Activated CD4-positive, alpha-beta T cell treated with anti-CD3 and anti-CD28 coated beads for 36 hours (primary cell): ENCODE measurements at regions of chr12 and their contacts with region 1.

Region 1: DNA sequence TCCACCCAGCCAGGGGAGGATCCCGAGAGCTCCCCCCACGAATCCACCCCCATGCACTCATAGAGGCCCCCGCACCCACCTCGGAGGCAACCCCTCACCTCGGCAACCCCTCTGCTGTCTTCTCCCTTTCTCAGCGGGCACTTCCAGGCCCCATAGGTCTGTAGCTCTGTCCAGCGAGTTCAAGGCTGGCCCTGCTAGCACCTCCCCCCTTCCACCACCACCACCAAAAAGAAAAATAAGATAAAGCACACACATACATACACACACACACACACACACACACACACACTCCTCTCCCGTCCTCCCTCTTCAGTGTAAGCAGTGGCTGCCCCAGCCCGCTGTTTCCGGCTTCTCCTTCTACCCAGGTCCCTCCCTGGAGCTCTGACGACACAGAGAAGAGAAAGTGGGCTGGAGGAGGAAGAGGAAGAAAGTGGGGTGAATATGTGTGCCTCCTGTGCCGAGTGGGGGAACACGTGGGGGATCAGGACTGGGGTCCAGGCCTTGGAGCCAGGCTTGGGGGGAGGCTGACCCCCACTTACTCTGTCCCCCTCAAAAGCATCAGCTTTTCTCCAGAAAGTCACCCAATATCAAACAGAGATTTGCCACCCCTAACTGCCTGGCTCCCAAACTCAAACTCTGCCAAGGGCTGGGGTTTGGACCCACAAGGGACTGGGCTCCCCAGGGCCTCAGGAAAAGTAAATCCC is at the start of gene STAT6:
- DNase-seq: peak; percentile 89
- ATAC-seq: peak; percentile 65
- H3K4me3 Mint-ChIP-seq: peak within 1 kb of the TSS; percentile 98
- H3K27ac Mint-ChIP-seq: peak within 1 kb of the TSS; percentile 97
- H3K4me1 Mint-ChIP-seq: peaks cover 50% of the 10 kb centered on the region
- H3K27me3 Mint-ChIP-seq: no peaks in the 10 kb centered on the region
- total RNA-seq, gene STAT6: 250 to 288 TPM

Region 2: DNA sequence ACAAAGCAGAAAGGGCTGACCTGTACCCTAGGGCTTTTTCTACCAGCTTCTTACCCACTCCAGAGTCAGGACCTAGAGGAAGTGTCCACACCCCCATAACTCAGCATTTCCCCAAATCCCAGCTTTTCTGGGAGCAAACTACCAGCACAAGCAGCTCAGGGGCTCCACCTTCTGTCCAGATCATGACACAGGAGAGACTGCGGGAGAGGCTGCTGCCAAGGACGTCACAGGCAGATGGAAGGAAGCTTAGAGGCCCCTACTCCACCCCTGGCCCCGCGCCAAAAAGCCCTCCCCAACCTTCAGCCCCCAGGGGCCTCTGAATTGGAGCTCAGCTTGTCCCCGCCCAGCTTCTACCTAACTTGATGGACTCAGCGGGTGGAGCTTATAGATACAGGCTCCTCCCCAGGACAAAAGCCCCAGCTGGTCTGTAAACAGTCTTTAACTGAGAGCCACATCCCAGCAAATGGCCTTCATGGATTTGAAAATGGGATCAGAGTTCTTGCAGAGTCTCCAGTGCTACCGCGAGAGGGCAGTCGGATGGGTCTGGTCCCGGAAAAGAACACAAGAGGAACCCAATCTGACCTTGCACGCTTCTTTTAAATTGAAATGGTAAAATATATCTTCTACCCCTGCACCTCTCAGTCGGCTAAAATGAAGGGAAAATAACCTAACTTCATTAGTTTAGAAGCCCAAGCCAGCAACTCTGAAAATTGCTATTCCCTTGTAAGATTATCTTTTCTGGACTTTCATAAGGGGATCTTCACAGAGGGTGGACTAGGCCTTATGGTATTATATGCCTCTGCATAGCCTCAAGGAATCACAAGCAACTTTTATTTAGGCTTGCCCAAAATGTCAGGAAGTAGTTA is 474.3 kb before region 1 on chr12:
- CTCF ChIA-PET with region 1: no interaction called
- POLR2A ChIA-PET with region 1: interaction called, 5 read pairs
- intact Hi-C with region 1: loop called in 1 of 2 experiments (anchors 2 kb)
- DNase-seq: peak; percentile 98
- ATAC-seq: peak; percentile 73
- H3K4me3 Mint-ChIP-seq: peak overlapping the region; percentile 87
- H3K27ac Mint-ChIP-seq: peak overlapping the region; percentile 92
- H3K4me1 Mint-ChIP-seq: peaks cover 60% of the 10 kb centered on the region
- H3K27me3 Mint-ChIP-seq: no peaks in the 10 kb centered on the region

Region 3: DNA sequence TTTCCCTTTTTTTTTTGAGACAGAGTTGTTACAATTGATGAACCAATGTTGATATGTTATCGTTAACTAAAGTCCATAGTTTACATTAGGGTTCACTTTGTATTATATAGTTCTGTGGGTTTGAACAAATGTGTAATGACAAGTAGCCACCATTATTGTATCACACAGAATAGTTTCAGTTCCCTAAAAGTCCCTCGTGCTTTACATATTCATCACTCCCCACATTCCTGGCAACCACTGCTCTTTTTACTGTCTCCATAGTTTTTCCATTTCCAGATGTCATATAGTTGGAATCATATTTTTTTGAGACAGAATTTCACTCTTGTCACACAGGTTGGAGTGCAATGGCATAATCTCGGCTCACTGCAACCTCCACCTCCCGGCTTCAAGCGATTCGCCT is 335.5 kb before region 1 on chr12:
- CTCF ChIA-PET with region 1: no interaction called
- POLR2A ChIA-PET with region 1: no interaction called
- intact Hi-C with region 1: no loop called
- DNase-seq: no peak
- ATAC-seq: no peak
- H3K4me3 Mint-ChIP-seq: no peak overlapping the region
- H3K27ac Mint-ChIP-seq: no peak overlapping the region
- H3K4me1 Mint-ChIP-seq: no peaks in the 10 kb centered on the region
- H3K27me3 Mint-ChIP-seq: no peaks in the 10 kb centered on the region

Region 4: GRCh38 chr12:56998981-56999380 is 112.2 kb before region 1 on chr12:
- CTCF ChIA-PET with region 1: interaction called, 14 read pairs
- POLR2A ChIA-PET with region 1: interaction called, 4 read pairs
- intact Hi-C with region 1: no loop called
- DNase-seq: peak; percentile 82
- ATAC-seq: peak; percentile 87
- H3K4me3 Mint-ChIP-seq: no peak overlapping the region
- H3K27ac Mint-ChIP-seq: peak overlapping the region; percentile 38
- H3K4me1 Mint-ChIP-seq: peaks cover 48% of the 10 kb centered on the region
- H3K27me3 Mint-ChIP-seq: no peaks in the 10 kb centered on the region

Region 5: DNA sequence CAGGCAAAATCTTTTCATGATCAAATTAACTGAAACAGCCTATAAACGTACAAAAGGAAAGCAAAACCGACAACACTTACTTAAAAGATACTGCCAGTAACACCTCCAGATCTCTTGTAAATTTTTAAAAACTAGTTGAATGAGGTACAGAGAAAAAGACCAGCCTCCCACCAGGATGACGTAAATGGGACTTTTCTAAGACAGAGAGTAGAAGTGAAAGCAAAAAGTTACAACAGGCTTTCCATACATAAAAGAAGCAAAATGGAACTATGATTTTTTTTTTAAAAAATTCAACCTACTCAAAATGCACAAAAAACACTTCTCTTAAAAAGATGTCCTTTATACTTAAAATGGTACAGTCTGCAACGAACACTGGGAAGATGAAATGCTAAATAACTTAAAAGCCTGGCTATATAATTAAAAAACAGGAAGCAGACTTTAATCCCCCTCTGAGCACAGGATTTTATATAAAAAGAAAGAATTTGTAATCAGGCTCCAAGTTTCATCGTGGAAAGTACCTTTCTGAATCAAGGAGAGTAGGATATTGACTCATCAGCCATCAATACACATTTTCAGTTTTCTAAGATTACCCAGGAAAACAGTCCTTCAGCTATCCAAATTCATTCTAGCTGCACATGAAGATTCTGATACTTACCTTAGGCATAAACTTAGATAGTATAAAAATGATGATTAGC is 47.0 kb before region 1 on chr12:
- CTCF ChIA-PET with region 1: interaction called, 411 read pairs
- POLR2A ChIA-PET with region 1: interaction called, 20 read pairs
- intact Hi-C with region 1: loop called (anchors 1 kb)
- DNase-seq: peak; percentile 80
- ATAC-seq: peak; percentile 79
- H3K4me3 Mint-ChIP-seq: peak overlapping the region; percentile 76
- H3K27ac Mint-ChIP-seq: peak overlapping the region; percentile 98
- H3K4me1 Mint-ChIP-seq: peaks cover 66% of the 10 kb centered on the region
- H3K27me3 Mint-ChIP-seq: no peaks in the 10 kb centered on the region

Region 6: GRCh38 chr12:57088459-57089248 is 22.5 kb before region 1 on chr12 and contains the start of gene NAB2:
- CTCF ChIA-PET with region 1: interaction called, 411 read pairs
- POLR2A ChIA-PET with region 1: interaction called, 12 read pairs
- intact Hi-C with region 1: loop called (anchors 1 kb)
- DNase-seq: peak; percentile 95
- ATAC-seq: peak; percentile 49
- H3K4me3 Mint-ChIP-seq: peak within 1 kb of the TSS; percentile 93
- H3K27ac Mint-ChIP-seq: peak within 1 kb of the TSS; percentile 95
- H3K4me1 Mint-ChIP-seq: peaks cover 63% of the 10 kb centered on the region
- H3K27me3 Mint-ChIP-seq: no peaks in the 10 kb centered on the region
- total RNA-seq, gene NAB2: 46.8 to 48.6 TPM

Region 7: DNA sequence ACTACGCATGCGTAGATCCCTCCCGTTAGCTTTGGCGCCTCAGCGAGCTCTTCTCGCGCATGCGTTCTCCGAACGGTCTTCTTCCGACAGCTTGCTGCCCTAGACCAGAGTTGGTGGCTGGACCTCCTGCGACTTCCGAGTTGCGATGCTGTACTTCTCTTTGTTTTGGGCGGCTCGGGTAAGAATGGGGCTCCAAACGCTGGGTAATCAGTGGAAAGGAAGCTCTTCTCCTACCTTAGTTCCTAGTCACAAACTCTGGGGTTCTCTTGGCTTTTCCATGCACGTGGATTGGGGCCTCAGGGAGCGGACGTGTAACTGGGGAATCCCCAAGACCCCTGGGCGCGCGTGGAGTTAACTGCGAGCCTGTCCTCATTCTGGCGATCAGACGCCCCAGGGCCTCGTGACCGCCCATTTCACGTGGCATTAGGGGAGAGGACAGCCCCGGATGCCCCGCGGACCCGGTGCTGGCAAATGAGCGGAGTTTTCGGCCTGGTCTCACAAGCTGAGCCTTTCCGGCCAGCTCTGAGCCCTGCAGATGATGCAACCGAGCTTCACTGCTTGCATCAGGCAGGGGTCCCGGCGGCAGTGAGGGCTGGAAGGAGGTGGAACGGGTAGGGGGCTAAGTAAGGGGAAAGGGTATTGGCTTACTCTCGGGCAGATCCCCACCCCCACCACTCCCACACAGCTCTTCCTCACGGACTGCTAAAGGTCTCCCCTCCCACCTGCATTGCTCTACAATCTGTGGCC is 118.6 kb after region 1 on chr12 and contains the start of gene SHMT2:
- CTCF ChIA-PET with region 1: interaction called, 13 read pairs
- POLR2A ChIA-PET with region 1: interaction called, 5 read pairs
- intact Hi-C with region 1: no loop called
- DNase-seq: peak; percentile 97
- ATAC-seq: peak; percentile 73
- H3K4me3 Mint-ChIP-seq: peak within 1 kb of the TSS; percentile 100
- H3K27ac Mint-ChIP-seq: peak within 1 kb of the TSS; percentile 99
- H3K4me1 Mint-ChIP-seq: peaks cover 65% of the 10 kb centered on the region
- H3K27me3 Mint-ChIP-seq: peaks cover 19% of the 10 kb centered on the region
- total RNA-seq, gene SHMT2: 436 to 487 TPM